Activated CD8-positive, alpha-beta T cell treated with anti-CD3 and anti-CD28 coated beads, Interleukin-2, amount 10 ng/mL, durations not matched to agents 7 days and 5 days (primary cell): ENCODE measurements at regions of chr10 and their contacts with region 1.

Region 1: GRCh38 chr10:11145495-11145855 is 127.8 kb downstream of the CELF2 start:
- DNase-seq: peak; percentile 86
- ATAC-seq: peak; percentile 69
- H3K4me3 Mint-ChIP-seq: peak overlapping the region; percentile 72
- H3K27ac Mint-ChIP-seq: peak overlapping the region; percentile 99
- H3K4me1 Mint-ChIP-seq: peaks cover 94% of the 10 kb centered on the region
- H3K27me3 Mint-ChIP-seq: no peaks in the 10 kb centered on the region

Region 2: DNA sequence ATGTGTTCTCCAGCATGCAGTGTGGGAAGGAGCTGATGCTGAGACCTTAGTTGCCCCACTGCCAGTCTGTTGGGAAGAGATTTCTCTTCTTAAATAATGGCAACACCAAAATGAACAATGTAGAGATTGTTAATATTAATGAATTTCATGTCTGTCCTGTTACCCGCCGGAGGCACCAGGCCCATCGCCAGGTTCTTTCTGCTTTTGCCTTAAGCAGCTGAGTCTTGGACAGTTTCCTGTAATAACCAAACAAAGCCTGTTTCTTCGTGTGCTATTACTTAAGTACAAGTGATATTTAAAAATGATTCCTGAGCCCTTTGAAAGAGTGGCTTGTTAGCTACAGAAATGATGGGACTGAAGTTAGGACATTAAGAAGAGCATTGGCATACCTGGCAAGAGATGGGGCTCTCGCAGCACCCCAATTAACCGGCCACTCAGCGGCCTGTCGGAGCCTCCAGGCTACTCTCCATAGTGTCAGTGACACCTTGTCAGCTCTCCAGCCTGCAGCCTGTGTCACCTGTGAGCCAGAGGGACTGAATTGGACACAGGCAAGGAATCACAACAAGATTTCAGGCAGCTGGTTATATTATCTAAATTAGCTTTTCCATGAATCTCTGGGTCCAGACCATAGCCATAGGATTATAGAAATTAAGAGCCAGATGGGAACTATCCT is 14.2 kb after region 1 on chr10:
- CTCF ChIA-PET with region 1: interaction called, 324 read pairs
- POLR2A ChIA-PET with region 1: interaction called, 1,291 read pairs
- DNase-seq: no peak
- ATAC-seq: no peak
- H3K4me3 Mint-ChIP-seq: no peak overlapping the region
- H3K27ac Mint-ChIP-seq: no peak overlapping the region
- H3K4me1 Mint-ChIP-seq: peaks cover 80% of the 10 kb centered on the region
- H3K27me3 Mint-ChIP-seq: no peaks in the 10 kb centered on the region

Region 3: DNA sequence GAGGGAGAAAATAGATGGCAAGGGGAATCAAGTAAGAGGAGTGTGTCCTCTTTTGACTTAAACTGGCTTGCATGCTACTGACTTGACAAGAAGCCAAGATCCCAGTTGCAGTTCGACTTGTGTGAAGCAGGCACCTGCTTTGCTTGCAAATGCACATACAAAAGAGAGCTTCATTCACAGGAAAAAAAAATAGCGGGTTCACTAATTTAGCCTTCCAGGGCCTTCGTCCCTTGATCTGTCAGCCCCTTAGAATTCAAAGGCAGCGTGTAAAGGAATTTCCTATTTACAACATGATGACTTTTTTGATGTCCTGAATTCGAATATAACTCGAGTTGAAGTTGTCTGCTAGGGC is 64.3 kb after region 1 on chr10:
- CTCF ChIA-PET with region 1: interaction called, 3 read pairs
- POLR2A ChIA-PET with region 1: interaction called, 11 read pairs
- DNase-seq: no peak
- ATAC-seq: peak; percentile 14
- H3K4me3 Mint-ChIP-seq: peak overlapping the region; percentile 65
- H3K27ac Mint-ChIP-seq: peak overlapping the region; percentile 84
- H3K4me1 Mint-ChIP-seq: peaks cover 97% of the 10 kb centered on the region
- H3K27me3 Mint-ChIP-seq: no peaks in the 10 kb centered on the region

Region 4: GRCh38 chr10:11270135-11270857 is 124.8 kb after region 1 on chr10:
- CTCF ChIA-PET with region 1: interaction called, 10 read pairs
- POLR2A ChIA-PET with region 1: no interaction called
- DNase-seq: peak; percentile 69
- ATAC-seq: peak; percentile 79
- H3K4me3 Mint-ChIP-seq: no peak overlapping the region
- H3K27ac Mint-ChIP-seq: peak overlapping the region; percentile 53
- H3K4me1 Mint-ChIP-seq: peaks cover 40% of the 10 kb centered on the region
- H3K27me3 Mint-ChIP-seq: no peaks in the 10 kb centered on the region